ENCODE measurements at regions of chr1 and their contacts with region 1.

Region 1: DNA sequence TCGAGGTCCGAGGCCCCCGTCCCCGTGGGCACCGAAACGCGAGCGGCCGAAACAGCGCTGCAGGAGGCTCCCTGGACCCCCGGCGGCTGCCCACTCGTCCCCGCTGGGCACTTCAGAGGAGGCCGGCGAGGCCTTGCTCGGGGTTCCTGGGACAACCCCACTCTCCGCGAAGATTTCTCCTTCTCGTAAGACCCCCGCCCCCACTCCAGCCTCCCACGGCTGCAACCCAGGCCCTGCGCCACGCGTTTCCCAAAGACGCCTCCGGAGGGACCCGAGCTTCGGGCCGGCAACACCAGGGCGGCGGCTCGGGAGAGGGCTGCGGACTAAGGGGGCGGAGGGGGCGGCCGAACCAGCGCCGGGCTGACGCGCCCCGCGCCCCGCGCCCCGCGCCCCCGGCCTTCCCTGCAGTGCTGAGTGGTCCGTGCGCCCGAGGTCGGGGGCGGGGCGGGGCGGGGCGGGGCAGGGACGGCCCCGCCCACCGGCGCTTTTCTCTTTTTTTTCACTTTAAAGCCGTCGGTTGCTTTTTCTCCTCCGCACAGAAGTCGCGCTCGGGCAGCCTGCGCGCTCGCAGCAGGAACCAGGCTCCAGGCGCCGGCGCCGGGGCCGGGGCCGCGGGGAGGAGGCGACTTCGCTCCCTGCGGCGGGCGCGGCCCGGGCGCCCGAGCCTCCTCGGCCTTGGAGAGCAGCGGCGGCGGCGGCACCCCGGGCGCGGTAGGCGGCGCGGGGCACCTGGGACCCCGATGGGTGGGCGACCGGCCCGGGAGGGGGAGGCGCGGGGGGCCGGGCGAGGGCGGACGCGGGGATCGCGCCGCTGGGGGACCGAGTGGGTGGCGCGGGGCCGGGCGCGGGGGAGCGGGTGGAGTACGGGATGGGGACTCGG is at the start of gene SPSB1:
- DNase-seq: no peak
- H3K4me3 ChIP-seq: peak within 1 kb of the TSS; percentile 99
- H3K27ac ChIP-seq: peak within 1 kb of the TSS; percentile 91
- H3K27me3 ChIP-seq: no peaks in the 10 kb centered on the region
- CTCF ChIP-seq: no peak
- polyA plus RNA-seq, gene SPSB1: 19.4 and 20.3 TPM in 2 replicates

Region 2: GRCh38 chr1:9269078-9269501 is 23.5 kb before region 1 on chr1:
- CTCF ChIA-PET with region 1: interaction called, 19 read pairs
- POLR2A ChIA-PET with region 1: interaction called, 5 read pairs
- DNase-seq: no peak
- H3K4me3 ChIP-seq: no peak overlapping the region
- H3K27ac ChIP-seq: no peak overlapping the region
- H3K27me3 ChIP-seq: no peaks in the 10 kb centered on the region
- CTCF ChIP-seq: no peak

Region 3: DNA sequence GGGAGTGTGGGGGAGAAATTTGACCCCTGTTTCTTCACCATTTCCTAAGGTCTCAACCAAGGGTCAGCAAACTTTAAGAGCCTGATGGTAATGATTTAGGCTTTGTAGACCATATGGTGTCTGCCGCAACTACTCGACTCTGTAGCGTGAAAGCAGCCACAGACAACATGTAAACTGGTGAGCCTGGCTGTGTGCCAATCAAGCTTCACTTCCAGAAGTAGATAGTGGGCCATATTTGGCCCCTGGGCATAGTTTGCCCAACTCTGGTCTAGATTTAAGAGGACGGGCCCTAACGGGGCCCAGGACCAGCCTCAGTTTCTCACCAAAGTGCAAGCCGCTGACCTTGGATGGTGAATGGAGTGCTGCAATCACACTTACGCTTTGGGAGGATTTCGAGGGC is 35.0 kb after region 1 on chr1:
- CTCF ChIA-PET with region 1: no interaction called
- POLR2A ChIA-PET with region 1: no interaction called
- DNase-seq: no peak
- H3K4me3 ChIP-seq: no peak overlapping the region
- H3K27ac ChIP-seq: no peak overlapping the region
- H3K27me3 ChIP-seq: no peaks in the 10 kb centered on the region
- CTCF ChIP-seq: no peak

Measured in AG04450 (cell line).